Lower lobe of right lung (tissue), 2 donors: ENCODE measurements at regions of chr11 and their contacts with region 1.

Region 1: GRCh38 chr11:57644748-57645688 is 4.7 kb downstream of the YPEL4 start:
- DNase-seq: peak; percentile 84
- ATAC-seq: peak; percentile 84 to 86
- H3K4me3 ChIP-seq: no peak overlapping the region
- H3K27ac ChIP-seq: peak overlapping the region; percentile 59
- H3K4me1 ChIP-seq: peaks cover 68% of the 10 kb centered on the region
- H3K27me3 ChIP-seq: peaks cover 30% of the 10 kb centered on the region
- CTCF ChIP-seq: peak; percentile 88

Region 2: DNA sequence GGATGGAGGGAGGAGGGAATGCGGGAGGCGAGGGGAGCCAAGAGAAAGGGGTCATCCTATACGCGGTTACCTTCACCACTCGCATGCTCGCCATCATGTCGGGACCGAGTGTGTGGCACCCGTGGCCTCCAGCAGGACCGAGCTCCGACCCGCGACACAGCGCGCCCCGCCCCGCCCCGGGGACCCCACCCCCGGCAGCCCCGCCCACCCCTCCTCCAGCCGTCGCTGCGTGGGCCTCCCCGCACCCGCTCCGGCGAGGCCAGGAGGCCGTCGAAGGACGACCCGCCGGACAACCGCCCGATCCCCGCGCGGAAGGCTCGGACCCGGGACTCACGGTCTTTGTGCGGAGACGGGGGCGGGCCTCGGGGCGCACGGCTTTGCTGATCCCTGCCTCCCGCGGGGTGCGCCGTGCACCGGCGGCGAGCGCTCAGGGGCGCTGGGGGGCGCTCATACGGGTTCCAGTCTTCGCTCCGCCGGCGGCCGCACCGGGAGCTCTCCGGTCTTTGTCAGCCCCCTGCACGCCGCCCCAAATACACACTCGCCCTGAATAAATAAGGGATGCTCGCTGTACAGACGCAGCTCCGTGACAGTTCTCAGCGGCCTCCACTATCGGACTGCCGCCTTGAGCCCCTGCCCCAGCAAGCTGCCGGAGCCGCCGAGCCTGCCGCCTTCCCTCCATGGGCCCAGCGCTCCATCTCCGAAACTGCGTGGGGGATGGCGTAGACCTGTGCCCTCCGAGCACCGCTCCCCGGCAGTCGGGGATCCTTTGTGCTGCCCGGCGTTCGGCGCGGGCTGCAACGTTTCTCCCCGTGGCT is 77.3 kb before region 1 on chr11 and contains the start of gene UBE2L6:
- intact Hi-C with region 1: loop called (anchors 5 kb)
- DNase-seq: peak; percentile 90
- ATAC-seq: peak; percentile 90 to 94
- H3K4me3 ChIP-seq: peak within 1 kb of the TSS; percentile 98
- H3K27ac ChIP-seq: peak within 1 kb of the TSS; percentile 87
- H3K4me1 ChIP-seq: peaks cover 32% of the 10 kb centered on the region
- H3K27me3 ChIP-seq: no peaks in the 10 kb centered on the region
- CTCF ChIP-seq: peak; percentile 95
- total RNA-seq, gene UBE2L6: 172 TPM